GM12878 (cell line): ENCODE measurements at regions of chr22 and their contacts with region 1.

Region 1: GRCh38 chr22:36144886-36145541 is 15.5 kb downstream of the APOL3 start:
- DNase-seq: no peak
- ATAC-seq: peak; percentile 90
- H3K4me3 ChIP-seq: no peak overlapping the region
- H3K27ac ChIP-seq: no peak overlapping the region
- H3K4me1 ChIP-seq: no peaks in the 10 kb centered on the region
- H3K27me3 ChIP-seq: no peaks in the 10 kb centered on the region
- CTCF ChIP-seq: peak; percentile 60 to 71 (median 67)
- EP300 ChIP-seq: no peak
- POLR2A ChIP-seq: no peak
- RAD21 ChIP-seq: peak; percentile 77

Region 2: DNA sequence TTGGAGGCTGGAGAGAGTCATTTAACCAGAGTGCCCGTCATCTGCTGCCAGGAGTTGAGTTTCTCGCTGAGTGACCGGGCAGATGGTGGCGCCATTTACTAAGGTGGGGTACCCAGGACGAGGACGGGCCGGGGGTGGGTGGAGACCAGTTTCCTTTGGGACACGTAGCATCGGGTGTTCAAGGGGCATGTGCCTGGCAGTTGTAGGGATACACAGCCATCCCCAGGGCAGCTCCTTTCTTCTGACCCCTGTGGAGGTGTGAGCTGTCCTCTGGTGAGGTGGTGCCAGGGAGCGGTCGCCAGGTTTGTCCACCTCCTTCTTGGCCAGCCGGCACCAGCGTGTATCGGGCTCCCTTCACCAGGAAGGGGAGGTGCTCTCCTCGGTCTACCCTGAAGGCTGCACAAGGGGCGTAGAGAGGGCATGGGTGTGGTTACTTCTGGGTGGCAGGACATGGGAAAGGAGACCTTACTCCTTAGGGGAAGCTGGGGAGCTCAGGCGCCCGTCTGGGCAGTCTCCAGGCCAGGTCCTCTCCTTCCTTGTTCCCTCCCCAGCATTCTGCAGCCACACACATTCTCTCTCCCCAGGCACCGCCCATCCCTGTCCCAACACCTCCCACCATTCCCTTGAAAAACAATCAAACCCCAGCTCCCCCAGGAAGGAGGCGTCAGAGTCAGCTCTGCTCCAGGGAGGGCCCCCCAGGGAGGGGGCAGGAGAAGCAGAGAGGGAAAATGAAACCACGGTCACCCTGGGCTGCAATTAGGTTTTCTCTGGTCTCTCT is 517.6 kb before region 1 on chr22:
- CTCF ChIA-PET with region 1: no interaction called
- POLR2A ChIA-PET with region 1: no interaction called
- RAD21 ChIA-PET with region 1: no interaction called
- SMC1A ChIA-PET with region 1: no interaction called
- in situ Hi-C with region 1: no loop called
- intact Hi-C with region 1: no loop called
- DNase-seq: no peak
- ATAC-seq: peak; percentile 70
- H3K4me3 ChIP-seq: peak overlapping the region; percentile 76
- H3K27ac ChIP-seq: peak overlapping the region; percentile 52; the same call in 1 of the 2 replicates
- H3K4me1 ChIP-seq: peaks cover 17% of the 10 kb centered on the region
- H3K27me3 ChIP-seq: no peaks in the 10 kb centered on the region
- CTCF ChIP-seq: peak; percentile 48 to 90 (median 54); a peak in 5 of 6 replicates
- EP300 ChIP-seq: no peak
- POLR2A ChIP-seq: no peak
- RAD21 ChIP-seq: peak; percentile 92

Region 3: GRCh38 chr22:36162127-36163034 is 17.4 kb after region 1 on chr22:
- CTCF ChIA-PET with region 1: interaction called, 12 read pairs
- POLR2A ChIA-PET with region 1: interaction called, 4 read pairs
- RAD21 ChIA-PET with region 1: interaction called, 5 read pairs
- SMC1A ChIA-PET with region 1: interaction called, 7 read pairs
- in situ Hi-C with region 1: no loop called
- intact Hi-C with region 1: no loop called
- DNase-seq: peak; percentile 70
- ATAC-seq: peak; percentile 79
- H3K4me3 ChIP-seq: peak overlapping the region; percentile 55
- H3K27ac ChIP-seq: peak overlapping the region; percentile 94
- H3K4me1 ChIP-seq: peaks cover 58% of the 10 kb centered on the region
- H3K27me3 ChIP-seq: no peaks in the 10 kb centered on the region
- CTCF ChIP-seq: no peak
- EP300 ChIP-seq: peak; percentile 13 to 37; a peak in 3 of 4 replicates
- POLR2A ChIP-seq: no peak
- RAD21 ChIP-seq: no peak

Region 4: DNA sequence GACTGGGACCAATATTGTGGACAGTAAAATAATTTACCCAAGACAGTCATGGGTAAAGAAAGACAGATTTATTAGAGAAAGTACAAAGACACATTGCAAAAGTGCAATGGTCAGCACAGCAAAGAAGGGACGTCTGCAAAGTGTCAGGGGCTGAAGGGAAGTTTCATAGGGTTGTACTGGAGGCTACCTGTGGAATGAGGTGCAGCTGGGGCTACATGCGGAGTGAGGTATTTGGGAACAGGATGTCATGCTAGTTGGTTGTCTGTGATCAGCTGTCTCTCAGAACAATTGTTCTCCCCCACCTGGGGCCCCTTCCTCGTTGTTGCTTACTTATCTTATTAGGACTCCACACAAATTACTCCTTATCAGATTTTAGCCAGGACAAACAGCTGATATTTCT is 26.9 kb after region 1 on chr22:
- CTCF ChIA-PET with region 1: interaction called, 129 read pairs
- POLR2A ChIA-PET with region 1: no interaction called
- RAD21 ChIA-PET with region 1: no interaction called
- SMC1A ChIA-PET with region 1: interaction called, 3 read pairs
- in situ Hi-C with region 1: no loop called
- intact Hi-C with region 1: no loop called
- DNase-seq: no peak
- ATAC-seq: no peak
- H3K4me3 ChIP-seq: no peak overlapping the region
- H3K27ac ChIP-seq: no peak overlapping the region
- H3K4me1 ChIP-seq: no peaks in the 10 kb centered on the region
- H3K27me3 ChIP-seq: no peaks in the 10 kb centered on the region
- CTCF ChIP-seq: no peak
- EP300 ChIP-seq: no peak
- POLR2A ChIP-seq: no peak
- RAD21 ChIP-seq: no peak